Panc1 (cell line): ENCODE measurements at regions of chr7 and their contacts with region 1.

Region 1: GRCh38 chr7:39446546-39446945 is 119.7 kb upstream of the YAE1 start:
- DNase-seq: no peak
- ATAC-seq: no peak
- H3K4me3 ChIP-seq: no peak overlapping the region
- H3K27ac ChIP-seq: no peak overlapping the region
- H3K4me1 ChIP-seq: no peaks in the 10 kb centered on the region
- H3K27me3 ChIP-seq: peaks cover 17% of the 10 kb centered on the region
- CTCF ChIP-seq: no peak

Region 2: GRCh38 chr7:38550836-38551235 is 895.7 kb before region 1 on chr7:
- CTCF ChIA-PET with region 1: no interaction called
- POLR2A ChIA-PET with region 1: no interaction called
- in situ Hi-C with region 1: no loop called
- intact Hi-C with region 1: no loop called
- DNase-seq: no peak
- ATAC-seq: no peak
- H3K4me3 ChIP-seq: no peak overlapping the region
- H3K27ac ChIP-seq: no peak overlapping the region
- H3K4me1 ChIP-seq: no peaks in the 10 kb centered on the region
- H3K27me3 ChIP-seq: peaks cover 5% of the 10 kb centered on the region; the same call in 1 of the 2 replicates
- CTCF ChIP-seq: no peak

Region 3: GRCh38 chr7:39113360-39113759 is 333.2 kb before region 1 on chr7:
- CTCF ChIA-PET with region 1: interaction called, 10 read pairs
- POLR2A ChIA-PET with region 1: no interaction called
- in situ Hi-C with region 1: no loop called
- intact Hi-C with region 1: no loop called
- DNase-seq: no peak
- ATAC-seq: no peak
- H3K4me3 ChIP-seq: no peak overlapping the region
- H3K27ac ChIP-seq: no peak overlapping the region
- H3K4me1 ChIP-seq: no peaks in the 10 kb centered on the region
- H3K27me3 ChIP-seq: no peaks in the 10 kb centered on the region
- CTCF ChIP-seq: no peak